ENCODE measurements at regions of chr11 and their contacts with region 1.

Region 1: GRCh38 chr11:66022401-66023185 is 3.7 kb downstream of the CATSPER1 start:
- DNase-seq: peak; percentile 50 to 86 (median 70)
- ATAC-seq: peak; percentile 98
- H3K4me3 ChIP-seq: no peak overlapping the region
- H3K4me3 Mint-ChIP-seq: no peak overlapping the region
- H3K27ac ChIP-seq: no peak overlapping the region
- H3K27ac Mint-ChIP-seq: no peak overlapping the region
- H3K4me1 ChIP-seq: peaks cover 20% of the 10 kb centered on the region
- H3K4me1 Mint-ChIP-seq: peaks cover 5% of the 10 kb centered on the region
- H3K27me3 ChIP-seq: no peaks in the 10 kb centered on the region
- H3K27me3 Mint-ChIP-seq: peaks cover 7% of the 10 kb centered on the region
- CTCF ChIP-seq: peak; percentile 90

Region 2: GRCh38 chr11:66045177-66045639 is 22.6 kb after region 1 on chr11:
- CTCF ChIA-PET with region 1: interaction called, 14 read pairs
- POLR2A ChIA-PET with region 1: no interaction called
- intact Hi-C with region 1: no loop called
- DNase-seq: peak; percentile 72 to 92 (median 82)
- ATAC-seq: peak; percentile 98
- H3K4me3 ChIP-seq: no peak overlapping the region
- H3K4me3 Mint-ChIP-seq: no peak overlapping the region
- H3K27ac ChIP-seq: no peak overlapping the region
- H3K27ac Mint-ChIP-seq: no peak overlapping the region
- H3K4me1 ChIP-seq: peaks cover 26% of the 10 kb centered on the region
- H3K4me1 Mint-ChIP-seq: peaks cover 17% of the 10 kb centered on the region
- H3K27me3 ChIP-seq: no peaks in the 10 kb centered on the region
- H3K27me3 Mint-ChIP-seq: peaks cover 5% of the 10 kb centered on the region
- CTCF ChIP-seq: peak; percentile 91

Region 3: DNA sequence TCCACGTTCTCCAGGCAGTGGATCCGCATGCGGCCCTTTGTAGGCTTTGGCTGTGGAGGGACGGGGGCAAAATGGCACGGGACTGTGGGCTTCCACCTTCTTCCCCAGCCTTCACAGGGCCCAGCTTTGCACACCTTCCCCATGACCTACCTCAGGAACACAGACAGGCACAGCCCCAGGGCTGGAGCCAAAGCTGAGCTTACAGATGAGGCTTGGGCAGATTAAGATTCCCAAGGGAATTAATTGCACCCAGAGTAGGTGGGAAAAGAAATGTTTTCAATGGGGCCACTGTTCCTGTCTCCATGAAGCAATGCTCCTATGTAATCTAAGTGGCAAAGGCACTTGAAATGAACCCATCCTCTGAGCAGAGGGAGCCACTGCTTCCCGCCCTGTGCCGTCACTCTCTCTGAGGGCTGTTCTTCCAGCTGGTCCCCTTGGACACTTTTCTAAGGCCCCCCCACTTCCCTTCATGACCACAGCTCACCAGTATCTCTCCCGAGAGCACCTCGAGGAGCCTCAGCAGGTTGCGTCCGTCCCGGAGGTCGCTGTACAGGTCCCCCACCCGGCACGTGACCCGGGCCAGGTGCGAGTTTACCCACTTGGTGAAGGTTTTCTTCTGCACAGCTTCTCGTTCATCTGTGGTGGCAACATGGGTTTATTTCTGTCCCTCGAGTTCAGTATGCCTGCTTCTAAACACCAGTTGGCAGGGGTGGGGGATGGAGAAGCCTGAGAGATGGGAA is 692.9 kb after region 1 on chr11:
- CTCF ChIA-PET with region 1: no interaction called
- POLR2A ChIA-PET with region 1: no interaction called
- intact Hi-C with region 1: no loop called
- DNase-seq: no peak
- ATAC-seq: no peak
- H3K4me3 ChIP-seq: no peak overlapping the region
- H3K4me3 Mint-ChIP-seq: no peak overlapping the region
- H3K27ac ChIP-seq: no peak overlapping the region
- H3K27ac Mint-ChIP-seq: no peak overlapping the region
- H3K4me1 ChIP-seq: peaks cover 7% of the 10 kb centered on the region
- H3K4me1 Mint-ChIP-seq: no peaks in the 10 kb centered on the region
- H3K27me3 ChIP-seq: peaks cover 0 to 6% of the 10 kb centered on the region in 2 experiments
- H3K27me3 Mint-ChIP-seq: peaks cover 47% of the 10 kb centered on the region
- CTCF ChIP-seq: no peak

Measured in CD4-positive, alpha-beta T cell (primary cell).